Mammary epithelial cell (primary cell): ENCODE measurements at regions of chr2 and their contacts with region 1.

Region 1: DNA sequence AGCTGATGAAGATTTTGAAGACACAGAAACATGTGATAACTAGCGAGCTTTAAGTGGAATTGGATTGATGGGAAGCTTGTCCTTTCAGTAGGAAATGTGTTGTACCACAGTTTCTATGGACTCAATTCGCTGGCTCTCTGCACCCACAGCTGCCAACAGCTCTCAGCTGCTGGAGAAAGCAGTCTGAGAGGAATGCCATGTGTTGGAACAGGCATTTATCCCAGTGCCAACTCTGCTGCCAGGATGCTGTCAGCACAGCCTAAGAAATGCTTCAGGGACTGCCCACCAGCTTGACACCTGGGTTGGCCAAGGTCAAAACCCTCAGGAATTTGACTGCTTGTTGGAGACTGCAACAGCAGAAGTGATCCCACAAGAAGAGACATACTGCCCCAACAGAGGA is 193.0 kb upstream of the THSD7B start:
- DNase-seq: no peak
- H3K4me3 ChIP-seq: no peak overlapping the region
- H3K27ac ChIP-seq: no peak overlapping the region
- H3K4me1 ChIP-seq: no peaks in the 10 kb centered on the region
- H3K27me3 ChIP-seq: no peaks in the 10 kb centered on the region
- CTCF ChIP-seq: no peak

Region 2: GRCh38 chr2:136538489-136538888 is 33.8 kb before region 1 on chr2:
- CTCF ChIA-PET with region 1: no interaction called
- dilution Hi-C with region 1: loop called (anchors 5 kb)
- in situ Hi-C with region 1: no loop called
- intact Hi-C with region 1: no loop called
- DNase-seq: no peak
- H3K4me3 ChIP-seq: no peak overlapping the region
- H3K27ac ChIP-seq: no peak overlapping the region
- H3K4me1 ChIP-seq: no peaks in the 10 kb centered on the region
- H3K27me3 ChIP-seq: no peaks in the 10 kb centered on the region
- CTCF ChIP-seq: no peak